A673 (cell line): ENCODE measurements at regions of chr17 and their contacts with region 1.

Region 1: DNA sequence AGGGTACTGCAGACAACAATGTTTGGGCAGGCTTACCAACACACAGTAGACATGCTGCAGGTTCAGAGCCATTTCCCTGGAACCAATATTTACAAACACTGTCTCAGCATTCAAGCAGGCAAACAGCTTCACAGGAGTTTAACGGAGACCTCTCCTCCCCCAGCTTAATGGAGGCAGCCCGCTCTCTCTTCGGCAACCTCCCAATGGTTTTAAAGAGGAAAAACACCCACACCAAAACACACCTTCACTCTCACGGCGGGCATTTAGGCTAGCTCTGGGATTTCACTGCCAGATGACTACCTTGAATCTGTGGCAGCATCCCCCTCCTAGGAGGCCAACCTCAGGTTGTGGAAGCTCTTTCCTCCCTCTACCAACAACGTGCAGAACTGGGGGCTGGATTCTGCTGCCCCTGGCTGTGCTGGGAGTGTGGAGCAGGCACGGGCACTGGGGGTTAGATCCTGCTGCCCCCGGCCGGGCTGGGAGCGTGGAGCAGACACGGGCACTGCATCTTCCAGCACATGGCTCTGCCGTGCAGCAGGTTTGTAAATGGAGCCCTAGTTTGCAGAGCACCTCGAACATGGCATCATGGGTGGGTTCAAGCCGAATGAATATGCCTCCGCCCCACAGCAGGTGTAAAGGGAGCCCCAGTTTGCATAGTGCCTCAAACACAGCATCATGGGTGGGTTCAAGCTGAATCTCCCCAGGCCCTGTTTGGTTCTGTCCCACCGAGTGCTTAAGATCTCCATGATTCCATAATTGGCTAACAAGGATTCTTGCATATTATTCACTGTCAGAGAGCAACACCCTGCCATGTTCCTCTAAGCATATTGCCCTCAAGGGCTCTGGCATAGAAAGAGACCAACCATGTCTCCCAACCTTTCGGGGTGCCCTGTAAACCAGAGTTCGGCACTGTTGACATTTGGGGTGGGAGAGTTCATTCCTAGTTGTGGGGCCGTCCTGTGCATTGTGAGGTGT is 86.4 kb downstream of the RBFOX3 start:
- DNase-seq: no peak
- H3K4me3 ChIP-seq: no peak overlapping the region
- H3K27ac ChIP-seq: no peak overlapping the region
- H3K4me1 ChIP-seq: no peaks in the 10 kb centered on the region
- H3K27me3 ChIP-seq: peaks cover 93% of the 10 kb centered on the region
- CTCF ChIP-seq: no peak

Region 2: GRCh38 chr17:79581324-79581932 is 56.9 kb after region 1 on chr17:
- CTCF ChIA-PET with region 1: no interaction called
- POLR2A ChIA-PET with region 1: interaction called, 14 read pairs
- intact Hi-C with region 1: no loop called
- DNase-seq: no peak
- H3K4me3 ChIP-seq: no peak overlapping the region
- H3K27ac ChIP-seq: no peak overlapping the region
- H3K4me1 ChIP-seq: no peaks in the 10 kb centered on the region
- H3K27me3 ChIP-seq: peaks cover 23% of the 10 kb centered on the region
- CTCF ChIP-seq: no peak

Region 3: DNA sequence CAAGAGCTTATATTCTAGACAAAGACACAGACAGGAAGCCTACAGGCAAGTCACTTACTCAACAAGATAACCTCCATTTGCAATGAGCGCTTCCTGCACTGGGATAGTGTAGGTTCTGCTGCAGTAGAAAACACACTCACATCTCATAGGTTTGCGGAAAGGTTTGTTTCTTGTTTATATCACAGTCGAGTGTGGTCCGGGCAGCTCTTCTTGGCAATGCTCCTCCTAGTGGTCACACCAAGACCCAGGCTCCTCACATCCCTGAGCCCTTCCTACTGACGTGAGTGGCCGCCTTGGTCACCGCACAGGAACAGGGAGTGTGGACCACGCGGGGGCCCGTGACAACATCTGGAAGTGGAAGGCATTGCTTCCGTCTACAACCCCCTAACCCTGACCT is 134.3 kb after region 1 on chr17:
- CTCF ChIA-PET with region 1: interaction called, 10 read pairs
- POLR2A ChIA-PET with region 1: no interaction called
- intact Hi-C with region 1: no loop called
- DNase-seq: peak; percentile 32
- H3K4me3 ChIP-seq: no peak overlapping the region
- H3K27ac ChIP-seq: no peak overlapping the region
- H3K4me1 ChIP-seq: no peaks in the 10 kb centered on the region
- H3K27me3 ChIP-seq: peaks cover 71% of the 10 kb centered on the region
- CTCF ChIP-seq: peak; percentile 62